HEK293T (cell line): ENCODE measurements at regions of chr10 and their contacts with region 1.

Region 1: DNA sequence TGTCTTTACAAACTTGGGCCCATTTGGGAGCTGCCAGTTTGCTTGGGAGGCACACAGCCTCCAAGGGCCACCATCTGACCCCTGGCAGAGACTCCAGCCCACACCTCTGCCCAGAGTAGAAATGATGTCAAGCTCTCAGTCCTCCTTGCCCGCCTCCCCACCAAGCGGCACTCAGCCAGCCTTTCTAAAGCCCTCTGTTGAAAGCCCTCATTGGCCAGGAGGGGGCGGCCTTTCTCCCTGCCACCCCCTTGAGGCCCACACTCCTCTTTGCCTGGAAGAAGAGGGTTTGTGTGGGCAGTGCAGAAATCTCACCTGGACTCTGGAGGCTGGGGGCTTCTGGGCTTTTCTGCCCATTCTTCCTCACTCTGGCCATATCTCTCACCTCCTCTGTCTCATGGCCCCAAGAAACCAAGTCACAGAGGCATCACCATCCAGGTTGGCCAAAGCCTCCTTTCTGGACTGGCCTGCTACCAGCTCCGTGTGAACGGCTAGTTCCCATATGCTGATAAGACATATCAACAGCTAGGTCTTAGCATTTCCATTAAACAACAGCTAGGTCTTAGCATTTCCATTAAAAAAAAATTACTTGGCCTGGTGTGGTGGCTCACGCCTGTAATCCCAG is 36.1 kb downstream of the UBTD1 start:
- DNase-seq: peak; percentile 80

Region 2: DNA sequence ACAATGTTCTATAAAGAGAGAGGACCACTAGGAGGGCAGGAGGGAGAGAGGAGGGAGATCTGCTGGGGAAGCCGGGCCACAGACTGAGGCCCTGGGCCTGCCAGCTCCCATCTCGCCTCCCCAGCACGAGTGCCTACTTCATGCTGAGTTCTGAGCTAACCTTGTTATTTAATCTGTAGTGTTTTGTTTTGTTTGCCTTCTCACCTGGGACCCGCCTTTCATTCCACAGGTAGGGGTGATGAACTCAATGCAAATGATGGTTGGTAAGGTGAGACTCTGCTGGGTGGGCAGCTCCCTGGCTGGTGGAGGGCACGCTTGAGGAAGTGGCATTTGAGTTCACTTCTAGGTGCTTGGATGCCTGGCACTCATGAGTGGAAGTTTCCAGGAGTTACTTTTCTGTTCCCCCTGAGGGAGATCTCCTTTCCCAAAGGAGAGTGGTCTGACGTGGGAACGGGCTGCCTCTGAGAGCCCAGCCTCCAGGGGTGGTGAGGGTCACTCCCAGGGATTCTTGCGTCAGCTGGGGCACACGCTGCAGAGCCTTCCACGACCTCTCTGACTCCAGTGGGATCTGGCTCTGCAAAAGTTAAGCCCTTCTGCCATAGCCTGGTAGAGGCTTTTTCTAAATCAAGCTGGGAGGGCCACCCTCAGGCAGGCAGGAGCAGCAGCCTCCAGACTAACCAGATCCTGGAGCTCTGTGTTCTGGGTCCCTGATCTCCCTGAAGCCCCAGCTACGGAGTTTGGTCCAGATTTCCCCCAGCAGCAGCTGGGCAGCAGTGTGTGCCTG is 13.7 kb before region 1 on chr10:
- CTCF ChIA-PET with region 1: interaction called, 15 read pairs
- POLR2A ChIA-PET with region 1: interaction called, 3 read pairs
- DNase-seq: no peak

Region 3: DNA sequence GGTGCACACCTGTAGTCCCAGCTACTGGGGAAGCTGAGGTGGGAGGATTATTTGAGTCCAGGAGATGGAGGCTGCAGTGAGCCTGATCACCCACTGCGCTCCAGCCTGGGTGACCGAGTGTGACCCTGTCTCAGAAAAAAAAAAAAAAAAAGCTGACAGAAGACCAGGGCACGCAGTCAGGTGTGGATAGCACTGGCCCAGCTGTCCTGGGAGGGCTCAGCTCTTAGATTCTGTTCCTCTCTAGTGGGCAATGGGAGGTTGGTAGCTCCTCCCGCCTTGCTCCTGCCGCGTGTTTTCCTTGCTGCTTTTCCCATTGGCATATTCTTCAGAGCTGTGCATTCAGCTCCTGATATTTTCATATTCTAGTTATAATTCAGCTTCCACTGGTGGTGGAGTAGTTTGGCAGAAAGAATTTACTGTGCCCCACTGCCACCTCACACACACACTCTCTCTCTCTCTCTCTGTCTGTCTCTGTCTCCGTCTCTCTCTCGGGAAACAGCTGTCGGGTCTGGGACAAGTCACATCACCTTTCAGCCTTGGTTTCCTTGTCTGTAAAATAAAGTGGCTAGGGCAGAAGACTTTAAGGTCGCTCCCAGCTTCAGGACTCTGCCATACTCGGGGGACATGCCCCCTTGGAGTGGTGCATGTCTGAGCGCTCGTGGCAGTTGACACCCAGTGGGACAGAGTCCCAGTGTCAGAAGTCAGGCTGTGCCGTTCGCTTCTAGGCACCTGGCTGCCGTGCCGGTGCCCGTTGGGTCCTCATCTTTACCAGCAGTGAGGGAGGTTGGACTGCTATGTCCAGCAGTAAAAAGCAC is 11.8 kb after region 1 on chr10:
- CTCF ChIA-PET with region 1: interaction called, 12 read pairs
- POLR2A ChIA-PET with region 1: no interaction called
- DNase-seq: no peak

Region 4: GRCh38 chr10:97553575-97554031 is 18.7 kb after region 1 on chr10:
- CTCF ChIA-PET with region 1: interaction called, 12 read pairs
- POLR2A ChIA-PET with region 1: no interaction called
- DNase-seq: peak; percentile 82

Region 5: DNA sequence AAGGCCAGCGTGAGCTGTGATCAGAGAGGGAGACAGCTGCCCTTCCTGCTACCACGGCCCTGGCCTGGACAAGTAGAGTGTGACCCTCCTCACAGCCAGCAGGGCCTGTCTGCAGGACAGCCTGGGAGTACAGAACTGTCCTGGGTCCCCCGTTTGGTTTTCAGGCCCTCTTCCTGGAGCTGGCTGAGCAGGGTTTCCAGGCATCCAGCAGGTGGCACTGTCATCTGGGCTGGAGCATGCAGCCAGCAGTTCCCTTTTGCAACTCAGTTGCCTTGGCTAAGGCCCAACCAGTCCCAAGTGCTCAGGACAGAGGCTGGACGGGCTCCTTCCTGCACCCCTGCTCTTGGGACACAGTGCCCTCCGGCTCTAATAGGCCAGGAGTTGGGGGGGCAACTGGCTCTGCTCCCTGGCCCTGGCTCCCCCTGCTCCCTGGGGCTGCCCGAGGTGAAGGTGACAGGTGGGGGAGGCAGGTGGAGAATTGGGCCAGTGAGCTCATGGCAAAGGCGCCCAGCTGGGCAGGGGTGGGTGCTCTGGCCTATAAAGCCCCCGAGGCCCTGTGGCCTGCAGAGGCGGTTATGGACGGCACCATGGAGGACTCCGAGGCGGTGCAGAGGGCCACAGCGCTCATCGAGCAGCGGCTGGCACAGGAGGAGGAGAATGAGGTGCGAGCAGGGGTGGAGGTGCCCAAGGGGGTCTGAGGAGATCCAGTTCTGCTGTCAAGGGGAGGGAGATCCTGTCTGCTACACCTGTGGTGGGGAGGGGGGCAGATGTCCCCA is 37.5 kb after region 1 on chr10 and contains the start of gene ANKRD2:
- CTCF ChIA-PET with region 1: interaction called, 10 read pairs
- POLR2A ChIA-PET with region 1: no interaction called
- DNase-seq: peak; percentile 86